AG04450 (cell line): ENCODE measurements at regions of chr7 and their contacts with region 1.

Region 1: DNA sequence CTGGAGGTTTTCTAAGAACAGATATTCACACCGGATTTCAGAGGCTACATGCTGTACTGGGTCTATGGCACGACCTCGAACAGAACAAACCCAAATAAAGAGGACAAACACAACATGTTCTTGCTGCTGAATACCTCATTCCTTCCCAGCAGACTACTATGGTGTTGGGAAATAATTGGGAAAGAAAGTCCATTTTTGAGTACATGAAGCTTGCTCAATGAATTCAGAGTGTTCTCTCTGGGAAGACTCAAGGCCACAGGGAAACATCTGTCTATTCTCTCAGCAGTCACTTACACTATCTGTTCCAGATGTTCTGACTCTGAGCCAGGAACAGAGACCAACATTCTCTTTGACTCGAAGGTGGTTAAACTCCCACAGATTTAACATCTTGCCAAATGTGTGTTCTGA is 30.9 kb downstream of the LAMB1 start:
- DNase-seq: peak; percentile 70
- H3K4me3 ChIP-seq: no peak overlapping the region
- H3K27ac ChIP-seq: no peak overlapping the region
- H3K27me3 ChIP-seq: no peaks in the 10 kb centered on the region
- CTCF ChIP-seq: no peak

Region 2: GRCh38 chr7:107902381-107902780 is 69.7 kb before region 1 on chr7:
- CTCF ChIA-PET with region 1: no interaction called
- POLR2A ChIA-PET with region 1: interaction called, 12 read pairs
- DNase-seq: no peak
- H3K4me3 ChIP-seq: no peak overlapping the region
- H3K27ac ChIP-seq: no peak overlapping the region
- H3K27me3 ChIP-seq: no peaks in the 10 kb centered on the region
- CTCF ChIP-seq: no peak

Region 3: GRCh38 chr7:107953924-107954303 is 18.2 kb before region 1 on chr7:
- CTCF ChIA-PET with region 1: interaction called, 4 read pairs
- POLR2A ChIA-PET with region 1: interaction called, 11 read pairs
- DNase-seq: no peak
- H3K4me3 ChIP-seq: no peak overlapping the region
- H3K27ac ChIP-seq: no peak overlapping the region
- H3K27me3 ChIP-seq: no peaks in the 10 kb centered on the region
- CTCF ChIP-seq: no peak

Region 4: DNA sequence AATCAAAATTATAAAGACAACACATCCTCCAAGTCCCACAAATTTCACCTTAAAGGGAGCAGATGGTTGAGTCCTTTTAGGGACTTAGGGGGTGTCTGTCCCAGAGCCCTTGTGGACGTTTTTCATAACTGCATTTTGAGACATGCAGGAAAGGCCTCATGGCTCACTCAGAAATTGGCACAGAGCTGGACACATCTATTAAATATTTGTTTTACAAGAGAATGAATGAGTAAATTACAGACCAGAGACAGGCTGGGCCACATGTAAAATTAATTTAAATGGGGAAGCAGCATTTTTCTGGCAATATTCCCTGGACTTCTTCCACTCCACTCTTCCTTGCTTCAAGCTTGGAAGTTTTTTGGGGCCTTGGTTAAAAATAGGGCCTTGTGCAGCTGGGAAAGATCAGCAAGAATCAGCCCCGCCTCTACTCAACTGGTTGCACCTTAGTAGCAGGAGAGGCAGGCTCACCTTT is 10.9 kb after region 1 on chr7:
- CTCF ChIA-PET with region 1: interaction called, 4 read pairs
- POLR2A ChIA-PET with region 1: interaction called, 13 read pairs
- DNase-seq: no peak
- H3K4me3 ChIP-seq: no peak overlapping the region
- H3K27ac ChIP-seq: peak overlapping the region; percentile 39
- H3K27me3 ChIP-seq: no peaks in the 10 kb centered on the region
- CTCF ChIP-seq: peak; percentile 43